Mammary epithelial cell (primary cell): ENCODE measurements at regions of chr4 and their contacts with region 1.

Region 1: DNA sequence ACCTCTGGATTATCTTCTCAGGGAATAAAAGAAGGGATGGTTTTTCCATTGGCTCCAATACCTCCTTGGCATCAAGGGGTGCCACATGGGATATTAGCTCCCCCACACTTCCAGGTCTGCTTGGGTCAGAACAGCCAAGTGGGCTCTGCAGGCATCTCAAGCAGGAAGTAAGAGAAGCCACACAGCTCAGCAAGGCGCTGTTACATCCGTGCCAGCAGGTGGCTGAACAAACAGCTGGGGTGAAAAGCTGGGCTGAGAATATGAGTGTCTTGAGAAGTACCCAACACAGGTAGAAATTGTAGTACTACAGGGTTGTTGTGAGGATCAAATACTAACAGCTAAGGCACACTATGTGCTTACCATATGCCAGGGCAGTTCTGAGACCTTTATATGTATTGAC is 76.7 kb upstream of the TMEM150C start:
- DNase-seq: no peak
- H3K4me3 ChIP-seq: no peak overlapping the region
- H3K27ac ChIP-seq: no peak overlapping the region
- H3K4me1 ChIP-seq: no peaks in the 10 kb centered on the region
- H3K27me3 ChIP-seq: no peaks in the 10 kb centered on the region
- CTCF ChIP-seq: no peak

Region 2: DNA sequence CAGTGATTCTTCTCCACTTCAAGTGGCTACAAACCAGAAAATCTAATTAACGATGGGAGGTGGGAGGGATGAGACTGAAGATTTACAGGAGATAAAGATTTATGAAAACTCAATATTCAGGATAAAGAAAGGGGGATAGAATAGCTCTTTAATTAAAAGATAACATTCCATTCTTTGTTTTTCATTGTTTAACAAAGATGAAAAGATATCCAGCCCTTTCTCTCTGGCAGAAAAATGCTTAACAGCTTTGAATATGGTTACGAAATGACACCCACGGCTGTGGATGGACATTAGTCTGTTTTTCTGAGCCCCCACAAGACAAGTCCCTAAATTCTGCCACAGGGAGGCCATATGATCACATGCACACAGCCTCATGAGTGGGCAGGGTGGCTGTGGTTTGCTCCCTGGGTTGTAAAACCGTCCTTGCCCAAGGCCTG is 113.1 kb before region 1 on chr4:
- CTCF ChIA-PET with region 1: no interaction called
- dilution Hi-C with region 1: no loop called
- in situ Hi-C with region 1: no loop called
- intact Hi-C with region 1: no loop called
- DNase-seq: no peak
- H3K4me3 ChIP-seq: no peak overlapping the region
- H3K27ac ChIP-seq: no peak overlapping the region
- H3K4me1 ChIP-seq: no peaks in the 10 kb centered on the region
- H3K27me3 ChIP-seq: no peaks in the 10 kb centered on the region
- CTCF ChIP-seq: no peak

Region 3: GRCh38 chr4:82578935-82579334 is 59.5 kb before region 1 on chr4:
- CTCF ChIA-PET with region 1: no interaction called
- dilution Hi-C with region 1: loop called (anchors 5 kb)
- in situ Hi-C with region 1: no loop called
- intact Hi-C with region 1: no loop called
- DNase-seq: no peak
- H3K4me3 ChIP-seq: no peak overlapping the region
- H3K27ac ChIP-seq: no peak overlapping the region
- H3K4me1 ChIP-seq: no peaks in the 10 kb centered on the region
- H3K27me3 ChIP-seq: no peaks in the 10 kb centered on the region
- CTCF ChIP-seq: peak; percentile 21 to 27